Dorsolateral prefrontal cortex (tissue), 120 donors: ENCODE measurements at regions of chr10 and their contacts with region 1.

Region 1: DNA sequence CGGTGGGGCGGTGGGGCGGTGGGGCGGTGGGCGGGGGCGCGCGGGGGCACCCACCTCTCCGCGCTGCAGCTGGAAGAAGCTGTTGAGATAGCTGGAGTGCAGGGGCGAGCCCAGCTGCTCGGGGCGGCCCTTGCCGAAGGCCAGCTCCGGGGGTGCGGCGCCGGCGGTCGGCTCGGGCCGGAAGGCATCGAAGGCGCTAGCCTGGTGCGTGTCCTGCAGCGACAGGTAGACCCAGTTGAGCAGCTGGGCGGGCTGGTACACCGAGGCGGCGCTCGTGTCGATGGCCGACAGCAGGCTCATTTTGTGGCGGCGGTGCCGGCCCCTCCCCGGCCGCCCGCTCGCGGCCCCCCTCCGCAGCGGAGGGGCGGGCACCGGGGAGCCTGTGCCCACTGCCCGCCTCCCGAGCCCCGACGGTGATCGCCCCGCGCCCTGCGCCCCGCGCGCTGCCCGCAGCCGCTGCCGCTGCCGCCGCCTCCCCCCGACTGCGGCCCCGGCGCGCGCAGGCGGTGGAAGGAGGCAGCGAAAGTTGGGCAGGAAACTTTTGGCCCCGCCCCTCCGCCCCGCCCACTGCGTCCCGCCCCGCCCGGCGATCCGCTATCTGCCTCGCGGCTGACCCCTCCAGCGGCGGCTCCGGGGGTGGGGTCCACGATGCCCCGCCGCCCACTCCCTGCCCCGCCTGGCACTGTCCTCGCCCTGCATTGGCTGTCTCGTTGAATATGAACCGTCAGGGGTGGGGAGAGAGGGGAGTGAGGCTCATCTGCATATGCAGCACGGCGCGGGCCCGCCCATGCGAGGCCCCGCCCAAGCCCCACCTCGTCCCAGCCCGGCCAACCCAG is at the start of gene ZCCHC24:
- DNase-seq: peak; percentile 71 to 99 (median 98)
- H3K4me3 ChIP-seq: peak within 1 kb of the TSS; percentile 64 to 97 (median 86)
- H3K27ac ChIP-seq: peak within 1 kb of the TSS; percentile 58 to 99 (median 97)
- H3K27me3 ChIP-seq: peaks cover 0 to 13% (median 0%) of the 10 kb centered on the region in 45 donors
- CTCF ChIP-seq: peak in 9 of 56 donors; percentile 4 to 27 (median 12)
- total RNA-seq, gene ZCCHC24: 46.7 to 245 (median 97.2) TPM

Region 2: GRCh38 chr10:79381804-79382221 is 63.5 kb before region 1 on chr10:
- intact Hi-C with region 1: loop called in 1 of 2 experiments (anchors 10 kb)
- DNase-seq: peak in 4 of 10 donors; percentile 60 to 68 (median 66)
- H3K4me3 ChIP-seq: no peak overlapping the region
- H3K27ac ChIP-seq: peak overlapping the region in 55 of 59 donors; percentile 6 to 89 (median 70)
- H3K27me3 ChIP-seq: no peaks in the 10 kb centered on the region
- CTCF ChIP-seq: no peak

Region 3: DNA sequence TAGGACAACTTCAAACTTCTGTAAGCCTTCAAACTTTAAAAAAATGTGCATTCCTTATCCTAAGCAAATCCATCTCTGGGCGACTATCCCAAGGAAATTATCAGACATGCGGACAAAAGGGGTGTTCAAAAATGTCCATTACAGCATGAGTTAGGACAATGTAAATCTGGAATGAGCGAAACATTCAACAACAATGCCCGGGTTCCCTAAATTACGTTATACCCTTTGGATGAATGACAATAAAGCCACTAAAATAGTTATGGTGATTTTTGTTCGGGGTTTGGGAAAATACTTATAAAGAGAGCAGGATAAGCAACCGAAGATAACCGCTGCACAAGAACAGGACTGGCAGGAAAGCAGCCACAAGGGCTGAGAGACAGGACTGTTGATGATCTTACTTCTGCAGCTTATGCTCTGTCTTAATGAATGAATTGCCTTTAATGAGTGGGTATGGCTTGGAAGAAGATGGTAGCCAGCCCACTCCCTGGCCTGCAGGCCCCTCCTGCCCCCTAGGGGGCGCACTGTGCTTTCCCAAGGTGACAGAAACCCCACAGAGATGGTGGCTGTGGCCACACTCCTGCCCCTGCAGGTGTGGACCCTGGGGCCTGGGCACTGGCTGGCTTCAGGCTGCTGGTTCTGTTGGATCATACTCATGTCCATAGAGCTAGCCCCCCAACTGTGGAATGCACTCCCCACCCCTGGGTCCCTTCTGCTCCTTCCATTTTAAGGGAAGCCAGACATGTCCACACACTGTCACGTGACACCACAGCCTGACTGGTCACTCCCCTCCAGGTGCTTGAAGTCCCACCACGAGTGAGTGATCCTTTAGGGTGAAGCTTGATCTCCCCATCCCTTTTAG is 45.0 kb before region 1 on chr10:
- intact Hi-C with region 1: loop called in 1 of 2 experiments (anchors 2 kb)
- DNase-seq: no peak
- H3K4me3 ChIP-seq: peak overlapping the region in 13 of 59 donors; percentile 0 to 38 (median 24)
- H3K27ac ChIP-seq: peak overlapping the region in 6 of 59 donors; percentile 41 to 90 (median 86)
- H3K27me3 ChIP-seq: no peaks in the 10 kb centered on the region
- CTCF ChIP-seq: peak; percentile 17 to 81 (median 64)

Region 4: DNA sequence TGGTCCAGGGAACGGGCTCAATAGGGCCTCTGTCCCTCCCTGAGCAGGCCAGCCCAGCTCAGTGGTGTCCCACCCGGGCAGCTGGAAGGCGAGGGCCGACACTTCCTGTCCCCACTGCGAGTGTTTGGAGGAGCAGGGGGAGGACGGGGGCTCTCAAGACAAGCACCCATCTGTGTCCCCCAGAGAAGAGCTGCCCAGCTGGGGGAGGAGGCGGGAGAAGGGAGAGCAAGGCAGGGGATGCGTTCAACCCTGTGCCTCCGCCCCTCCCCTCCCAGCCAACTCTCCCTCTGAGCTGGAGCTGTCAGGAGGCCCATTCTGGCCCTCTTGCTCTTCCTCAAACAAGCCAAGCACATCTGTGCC is 35.7 kb before region 1 on chr10:
- intact Hi-C with region 1: loop called (anchors 1 kb)
- DNase-seq: peak; percentile 45 to 99 (median 96)
- H3K4me3 ChIP-seq: peak overlapping the region in 2 of 59 donors; percentile 8 to 30
- H3K27ac ChIP-seq: peak overlapping the region in 2 of 59 donors; percentile 82 to 85
- H3K27me3 ChIP-seq: no peaks in the 10 kb centered on the region
- CTCF ChIP-seq: peak in 14 of 56 donors; percentile 2 to 34 (median 16)